ENCODE measurements at regions of chr12 and their contacts with region 1.

Region 1: DNA sequence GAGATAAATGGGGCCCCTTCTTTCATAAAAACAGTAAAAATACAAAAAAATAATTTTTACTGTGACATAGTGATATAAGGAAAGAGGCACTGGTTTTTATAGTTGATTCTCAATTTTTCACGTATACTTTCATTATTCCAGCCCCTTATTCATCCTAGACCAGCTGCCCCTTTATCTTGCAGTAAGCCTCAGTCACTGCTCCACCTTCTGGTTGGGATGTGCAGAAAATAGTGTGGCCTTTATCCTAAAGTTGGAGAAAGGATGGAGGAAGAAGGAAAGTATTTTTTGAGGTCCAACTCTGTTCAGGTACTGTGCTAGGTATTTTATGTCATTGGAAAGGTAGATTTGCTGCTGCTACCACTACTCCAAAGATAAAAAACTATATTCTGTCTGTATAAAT is 172.7 kb downstream of the ANO6 start:
- DNase-seq: peak in 6 of 7 donors; percentile 21 to 46 (median 34)
- H3K4me3 ChIP-seq: no peak overlapping the region
- H3K27ac ChIP-seq: no peak overlapping the region
- H3K4me1 ChIP-seq: no peaks in the 10 kb centered on the region
- H3K27me3 ChIP-seq: no peaks in the 10 kb centered on the region
- CTCF ChIP-seq: peak; percentile 15 to 74 (median 67)
- POLR2A ChIP-seq: no peak

Region 2: GRCh38 chr12:45170456-45171042 is 218.0 kb before region 1 on chr12:
- intact Hi-C with region 1: loop called in 1 of 2 experiments (anchors 10 kb)
- DNase-seq: peak; percentile 79 to 94 (median 88)
- H3K4me3 ChIP-seq: no peak overlapping the region
- H3K27ac ChIP-seq: no peak overlapping the region
- H3K4me1 ChIP-seq: no peaks in the 10 kb centered on the region
- H3K27me3 ChIP-seq: no peaks in the 10 kb centered on the region
- CTCF ChIP-seq: peak; percentile 79 to 90 (median 86)
- POLR2A ChIP-seq: no peak

Region 3: DNA sequence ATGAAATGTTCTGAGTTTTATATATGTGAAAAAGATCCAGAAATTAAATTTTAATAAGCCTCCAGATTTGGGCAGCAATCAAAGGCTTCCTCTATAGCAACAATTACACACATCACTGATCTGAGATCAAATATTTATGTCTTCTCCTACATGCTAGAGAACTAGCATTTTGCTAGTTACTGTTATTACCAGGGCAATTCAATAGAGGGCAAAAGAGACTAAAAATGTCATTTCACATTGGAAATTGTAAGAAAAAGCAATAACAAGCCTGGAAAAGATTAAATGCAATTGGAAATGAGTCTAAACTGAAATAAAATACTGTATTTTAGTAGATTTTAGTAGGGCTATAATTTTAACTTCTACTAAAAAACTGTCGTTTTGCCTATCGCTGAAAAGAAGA is 205.3 kb before region 1 on chr12:
- intact Hi-C with region 1: loop called (anchors 10 kb)
- DNase-seq: no peak
- H3K4me3 ChIP-seq: no peak overlapping the region
- H3K27ac ChIP-seq: no peak overlapping the region
- H3K4me1 ChIP-seq: no peaks in the 10 kb centered on the region
- H3K27me3 ChIP-seq: no peaks in the 10 kb centered on the region
- CTCF ChIP-seq: peak; percentile 12 to 54 (median 44)
- POLR2A ChIP-seq: no peak

Region 4: GRCh38 chr12:45215419-45216229 is 172.9 kb before region 1 on chr12 and contains the start of gene ANO6:
- intact Hi-C with region 1: loop called in 1 of 2 experiments (anchors 5 kb)
- DNase-seq: peak; percentile 86 to 94 (median 89)
- H3K4me3 ChIP-seq: peak within 1 kb of the TSS; percentile 73 to 95 (median 84)
- H3K27ac ChIP-seq: peak within 1 kb of the TSS; percentile 77 to 97 (median 92)
- H3K4me1 ChIP-seq: peaks cover 2 to 29% of the 10 kb centered on the region in 2 donors
- H3K27me3 ChIP-seq: no peaks in the 10 kb centered on the region
- CTCF ChIP-seq: peak in 2 of 6 experiments; percentile 5 to 33
- POLR2A ChIP-seq: peak; percentile 84 to 95
- total RNA-seq, gene ANO6: 38.2 to 92.3 (median 66.9) TPM

Measured in adrenal gland (tissue), 19 donors.